ENCODE measurements at regions of chr11 and their contacts with region 1.

Region 1: GRCh38 chr11:64688534-64688982 is 34.4 kb downstream of the NRXN2 start:
- DNase-seq: peak; percentile 86 to 93 (median 91)
- H3K4me3 ChIP-seq: peak overlapping the region; percentile 29
- H3K27ac ChIP-seq: peak overlapping the region in 1 of 2 donors; percentile 26
- H3K4me1 ChIP-seq: peaks cover 4% of the 10 kb centered on the region
- H3K27me3 ChIP-seq: no peaks in the 10 kb centered on the region
- CTCF ChIP-seq: peak; percentile 85 to 92 (median 89)
- EP300 ChIP-seq: no peak
- POLR2A ChIP-seq: no peak

Region 2: GRCh38 chr11:64386306-64386702 is 302.3 kb before region 1 on chr11:
- intact Hi-C with region 1: no loop called
- DNase-seq: no peak
- H3K4me3 ChIP-seq: no peak overlapping the region
- H3K27ac ChIP-seq: no peak overlapping the region
- H3K4me1 ChIP-seq: no peaks in the 10 kb centered on the region
- H3K27me3 ChIP-seq: no peaks in the 10 kb centered on the region
- CTCF ChIP-seq: no peak
- EP300 ChIP-seq: no peak
- POLR2A ChIP-seq: no peak

Region 3: GRCh38 chr11:64723117-64723906 is 34.8 kb after region 1 on chr11 and contains the start of gene NRXN2:
- intact Hi-C with region 1: loop called in 2 of 4 experiments (anchors 2 to 5 kb)
- DNase-seq: peak; percentile 64 to 89 (median 78)
- H3K4me3 ChIP-seq: peak within 1 kb of the TSS; percentile 64
- H3K27ac ChIP-seq: no peak within 1 kb of the TSS
- H3K4me1 ChIP-seq: no peaks in the 10 kb centered on the region
- H3K27me3 ChIP-seq: no peaks in the 10 kb centered on the region
- CTCF ChIP-seq: peak; percentile 61 to 84 (median 83)
- EP300 ChIP-seq: no peak
- POLR2A ChIP-seq: no peak
- total RNA-seq, gene NRXN2: 7.0 to 64.1 (median 19.7) TPM

Measured in ovary (tissue), 10 donors.